GM12878 (cell line): ENCODE measurements at regions of chr3 and their contacts with region 1.

Region 1: DNA sequence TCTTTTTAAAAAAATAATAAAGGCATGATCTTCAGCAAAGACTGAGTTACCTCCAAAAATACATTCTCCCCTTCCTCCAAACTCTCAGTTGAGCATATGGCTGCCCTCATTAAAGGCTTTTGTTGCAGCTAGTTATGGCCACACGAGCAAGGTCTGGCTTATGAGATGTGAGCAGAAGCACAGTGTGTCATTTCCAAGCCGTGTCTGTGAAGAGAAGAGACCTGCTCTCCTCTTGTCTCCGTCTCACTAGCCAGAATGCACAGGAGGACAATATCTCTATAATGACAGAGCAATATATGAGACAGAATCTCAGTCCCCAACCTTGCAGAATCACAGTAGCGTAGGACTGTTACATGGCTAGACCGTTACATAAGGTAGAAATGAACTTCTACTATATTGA is 152.3 kb downstream of the MAGI1 start:
- DNase-seq: no peak
- ATAC-seq: no peak
- H3K4me3 ChIP-seq: no peak overlapping the region
- H3K27ac ChIP-seq: no peak overlapping the region
- H3K4me1 ChIP-seq: no peaks in the 10 kb centered on the region
- H3K27me3 ChIP-seq: no peaks in the 10 kb centered on the region; a peak in 1 of 4 replicates
- CTCF ChIP-seq: no peak
- EP300 ChIP-seq: no peak
- POLR2A ChIP-seq: no peak
- RAD21 ChIP-seq: no peak

Region 2: GRCh38 chr3:65902304-65902793 is 16.0 kb after region 1 on chr3:
- CTCF ChIA-PET with region 1: no interaction called
- POLR2A ChIA-PET with region 1: no interaction called
- RAD21 ChIA-PET with region 1: no interaction called
- SMC1A ChIA-PET with region 1: no interaction called
- in situ Hi-C with region 1: no loop called
- intact Hi-C with region 1: loop called (anchors 1 kb)
- DNase-seq: no peak
- ATAC-seq: no peak
- H3K4me3 ChIP-seq: no peak overlapping the region
- H3K27ac ChIP-seq: no peak overlapping the region
- H3K4me1 ChIP-seq: no peaks in the 10 kb centered on the region
- H3K27me3 ChIP-seq: no peaks in the 10 kb centered on the region; a peak in 1 of 4 replicates
- CTCF ChIP-seq: no peak
- EP300 ChIP-seq: no peak
- POLR2A ChIP-seq: no peak
- RAD21 ChIP-seq: no peak